Heart right ventricle (tissue), 16 donors: ENCODE measurements at regions of chr21 and their contacts with region 1.

Region 1: DNA sequence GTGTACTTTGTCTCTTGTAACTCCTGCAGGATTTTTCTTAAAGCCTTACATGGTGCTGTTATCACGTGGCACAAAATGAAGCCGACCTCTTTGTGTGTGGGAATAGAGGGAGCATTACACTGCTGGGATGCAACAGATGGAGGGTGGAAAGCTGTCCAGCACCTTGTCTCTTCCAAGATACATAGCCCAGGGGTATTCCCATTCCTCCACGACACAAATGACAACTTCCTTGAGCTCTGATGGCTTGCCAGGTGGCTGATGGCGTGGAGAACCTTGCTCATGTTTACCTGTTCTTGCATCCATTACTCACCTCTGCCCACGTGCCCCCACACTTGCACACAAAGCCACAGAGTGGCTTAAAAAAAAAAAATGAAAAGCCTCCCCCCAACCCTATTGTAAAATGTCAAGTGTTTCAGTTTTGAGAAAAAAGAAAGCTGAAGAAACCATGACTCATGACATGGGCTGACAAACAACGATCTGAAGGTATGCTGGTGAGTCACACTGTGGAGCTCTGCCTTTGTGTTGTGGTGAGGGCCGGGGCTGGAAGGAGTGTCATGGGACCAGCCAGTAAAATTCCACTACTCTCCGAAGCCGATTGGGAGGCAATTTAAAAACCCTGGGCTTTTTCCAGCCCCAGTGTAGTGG is 32.0 kb upstream of the ATP5PO start:
- DNase-seq: peak; percentile 47 to 48
- ATAC-seq: peak; percentile 88 to 98 (median 92)
- H3K4me3 ChIP-seq: peak overlapping the region in 6 of 10 donors; percentile 2 to 32 (median 20)
- H3K27ac ChIP-seq: peak overlapping the region in 8 of 10 donors; percentile 3 to 84 (median 43)
- H3K4me1 ChIP-seq: peaks cover 0 to 52% (median 8%) of the 10 kb centered on the region in 9 donors
- H3K27me3 ChIP-seq: no peaks in the 10 kb centered on the region
- CTCF ChIP-seq: no peak

Region 2: DNA sequence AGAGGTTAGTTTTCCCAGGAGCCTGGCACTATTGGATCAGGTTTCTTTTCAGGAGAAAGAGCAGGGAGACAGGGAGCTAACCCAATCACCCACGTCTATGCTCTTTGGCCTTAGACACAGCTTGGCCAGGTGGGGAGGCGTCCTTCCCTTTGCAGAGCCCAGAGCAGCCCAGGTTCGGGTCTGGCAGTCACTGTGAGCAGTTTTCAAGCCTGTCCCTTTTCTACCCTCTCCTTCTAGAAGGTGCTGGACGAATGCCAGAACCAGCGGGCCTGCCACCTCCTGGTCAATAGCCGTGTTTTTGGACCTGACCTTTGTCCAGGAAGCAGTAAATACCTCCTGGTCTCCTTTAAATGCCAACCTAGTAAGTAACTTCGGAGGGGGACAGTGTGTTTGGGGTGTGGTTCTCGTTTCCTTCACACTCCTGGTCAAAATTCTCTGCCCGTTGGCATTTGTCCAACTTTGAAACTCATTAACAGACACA is 1490.2 kb before region 1 on chr21:
- intact Hi-C with region 1: no loop called
- DNase-seq: peak; percentile 36 to 52
- ATAC-seq: peak in 7 of 8 donors; percentile 9 to 61 (median 32)
- H3K4me3 ChIP-seq: no peak overlapping the region
- H3K27ac ChIP-seq: peak overlapping the region; percentile 27 to 83 (median 64)
- H3K4me1 ChIP-seq: peaks cover 15 to 36% (median 22%) of the 10 kb centered on the region in 9 donors
- H3K27me3 ChIP-seq: no peaks in the 10 kb centered on the region
- CTCF ChIP-seq: peak in 5 of 9 donors; percentile 8 to 43 (median 34)

Region 3: DNA sequence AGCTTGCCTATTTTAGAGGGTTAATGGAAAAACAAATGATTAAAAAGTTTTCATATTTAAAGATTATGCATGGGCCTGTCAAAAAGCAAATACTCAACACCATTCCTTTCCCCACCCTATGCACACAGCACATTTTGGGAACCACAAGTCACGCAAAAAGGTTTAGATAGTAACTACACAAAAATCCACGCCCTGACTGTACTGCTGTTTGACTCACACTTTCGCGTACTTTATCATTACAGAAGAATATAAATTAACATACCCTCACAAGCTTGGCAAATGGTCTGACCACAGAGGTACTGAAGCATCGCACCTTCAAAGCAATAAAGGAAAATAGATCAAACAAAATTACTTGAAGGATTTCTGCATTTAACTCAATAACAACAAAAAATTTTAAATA is 33.4 kb before region 1 on chr21:
- intact Hi-C with region 1: no loop called
- DNase-seq: no peak
- ATAC-seq: no peak
- H3K4me3 ChIP-seq: peak overlapping the region in 8 of 10 donors; percentile 74 to 98 (median 83)
- H3K27ac ChIP-seq: peak overlapping the region in 4 of 10 donors; percentile 91 to 94 (median 94)
- H3K4me1 ChIP-seq: peaks cover 0 to 58% (median 34%) of the 10 kb centered on the region in 9 donors
- H3K27me3 ChIP-seq: no peaks in the 10 kb centered on the region
- CTCF ChIP-seq: no peak

Region 4: DNA sequence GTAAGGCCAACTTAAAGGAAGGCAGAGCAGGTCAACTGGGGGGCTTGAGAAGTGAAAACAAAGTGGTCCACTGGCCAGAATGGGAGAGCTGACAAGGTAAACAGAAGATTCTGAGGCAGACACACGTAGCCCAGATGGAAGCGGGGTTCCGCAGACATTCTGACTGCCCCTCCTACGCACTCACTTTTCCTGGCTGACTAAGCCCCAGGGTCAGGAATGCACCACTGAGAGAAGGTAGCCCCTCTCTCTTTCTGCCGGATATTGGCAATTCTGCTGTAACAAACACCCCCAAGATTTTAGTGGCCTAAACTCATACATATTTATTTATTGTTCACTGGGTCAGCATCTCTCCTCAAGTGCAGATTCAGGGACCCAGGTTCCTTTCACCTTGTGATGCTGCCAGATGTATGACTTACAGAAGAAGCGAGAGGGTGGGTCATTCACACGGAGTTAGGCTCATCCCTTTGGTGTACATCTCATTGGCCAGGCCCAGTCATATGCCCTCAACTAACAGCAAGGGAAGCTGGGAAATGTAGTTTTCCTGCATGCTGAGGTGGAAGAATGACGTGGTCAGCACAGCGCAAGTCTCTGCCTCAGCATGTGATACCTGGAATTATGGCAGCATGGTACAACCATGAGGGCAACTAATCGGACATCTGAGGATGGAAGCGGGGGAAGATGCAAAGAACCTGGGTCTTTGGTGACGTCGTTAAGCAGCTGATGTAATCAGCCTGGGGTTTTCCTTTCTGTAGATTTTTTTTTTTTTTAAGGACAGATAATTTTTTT is 82.4 kb after region 1 on chr21:
- intact Hi-C with region 1: loop called in 1 of 10 experiments (anchors 10 kb)
- DNase-seq: peak in 1 of 2 donors; percentile 46
- ATAC-seq: peak; percentile 64 to 94 (median 84)
- H3K4me3 ChIP-seq: peak overlapping the region in 4 of 10 donors; percentile 1 to 17 (median 13)
- H3K27ac ChIP-seq: no peak overlapping the region
- H3K4me1 ChIP-seq: peaks cover 0 to 18% (median 0%) of the 10 kb centered on the region in 9 donors
- H3K27me3 ChIP-seq: no peaks in the 10 kb centered on the region
- CTCF ChIP-seq: no peak

Region 5: GRCh38 chr21:34336756-34337391 is 389.3 kb after region 1 on chr21:
- intact Hi-C with region 1: loop called in 1 of 10 experiments (anchors 10 kb)
- DNase-seq: no peak
- ATAC-seq: peak in 5 of 8 donors; percentile 19 to 50 (median 35)
- H3K4me3 ChIP-seq: no peak overlapping the region
- H3K27ac ChIP-seq: peak overlapping the region in 3 of 10 donors; percentile 13 to 26 (median 15)
- H3K4me1 ChIP-seq: peaks cover 0 to 25% (median 15%) of the 10 kb centered on the region in 9 donors
- H3K27me3 ChIP-seq: no peaks in the 10 kb centered on the region
- CTCF ChIP-seq: no peak